ENCODE measurements at regions of chr9 and their contacts with region 1.

Region 1: DNA sequence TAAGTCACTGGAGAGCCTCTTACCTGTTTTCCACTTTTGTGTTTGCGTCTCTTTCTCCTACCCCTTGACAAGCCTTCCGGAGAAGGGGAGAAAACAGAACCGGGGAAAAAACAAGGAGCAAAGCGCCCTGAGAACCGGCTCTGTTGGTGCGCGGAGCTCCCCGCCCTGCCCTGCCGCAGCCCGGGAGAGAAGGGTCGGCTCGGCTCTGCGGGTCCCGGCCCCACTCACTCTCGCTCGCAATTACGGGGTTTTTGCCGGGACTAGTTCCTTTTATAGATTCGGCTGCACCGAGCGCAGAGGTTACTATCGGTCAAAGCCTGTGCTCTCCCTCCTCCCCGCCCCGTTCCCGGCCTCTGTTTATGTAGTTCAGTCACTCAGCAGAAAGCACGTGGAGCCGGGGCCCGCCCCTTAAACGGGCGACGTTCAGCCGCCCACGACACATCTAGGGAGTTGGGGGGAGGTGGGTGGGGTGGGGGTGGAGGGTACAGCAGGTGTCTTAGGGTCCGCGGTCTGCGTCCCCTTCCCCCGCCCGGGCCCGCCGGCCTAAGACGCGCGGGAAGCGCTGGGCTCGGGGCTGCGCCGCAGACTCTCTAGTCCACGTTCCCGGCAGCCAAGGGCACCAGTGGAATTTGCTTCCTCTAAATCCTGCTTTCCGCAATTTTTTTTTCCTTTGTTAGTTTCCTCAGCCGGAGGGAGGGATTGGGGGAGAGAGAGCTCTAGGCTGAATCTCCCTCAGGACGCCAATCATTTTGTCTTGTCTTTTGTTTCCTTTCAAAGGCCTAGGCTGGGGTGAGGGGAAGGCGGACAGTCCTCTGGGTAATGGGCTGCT is at the start of gene ABCA1:
- DNase-seq: peak; percentile 90 to 97 (median 95)
- ATAC-seq: peak; percentile 92 to 94
- H3K4me3 ChIP-seq: peak within 1 kb of the TSS; percentile 97
- H3K27ac ChIP-seq: peak within 1 kb of the TSS; percentile 65
- H3K4me1 ChIP-seq: peaks cover 4% of the 10 kb centered on the region
- H3K27me3 ChIP-seq: no peaks in the 10 kb centered on the region
- total RNA-seq, gene ABCA1: 6.3 to 14.2 (median 9.2) TPM

Region 2: DNA sequence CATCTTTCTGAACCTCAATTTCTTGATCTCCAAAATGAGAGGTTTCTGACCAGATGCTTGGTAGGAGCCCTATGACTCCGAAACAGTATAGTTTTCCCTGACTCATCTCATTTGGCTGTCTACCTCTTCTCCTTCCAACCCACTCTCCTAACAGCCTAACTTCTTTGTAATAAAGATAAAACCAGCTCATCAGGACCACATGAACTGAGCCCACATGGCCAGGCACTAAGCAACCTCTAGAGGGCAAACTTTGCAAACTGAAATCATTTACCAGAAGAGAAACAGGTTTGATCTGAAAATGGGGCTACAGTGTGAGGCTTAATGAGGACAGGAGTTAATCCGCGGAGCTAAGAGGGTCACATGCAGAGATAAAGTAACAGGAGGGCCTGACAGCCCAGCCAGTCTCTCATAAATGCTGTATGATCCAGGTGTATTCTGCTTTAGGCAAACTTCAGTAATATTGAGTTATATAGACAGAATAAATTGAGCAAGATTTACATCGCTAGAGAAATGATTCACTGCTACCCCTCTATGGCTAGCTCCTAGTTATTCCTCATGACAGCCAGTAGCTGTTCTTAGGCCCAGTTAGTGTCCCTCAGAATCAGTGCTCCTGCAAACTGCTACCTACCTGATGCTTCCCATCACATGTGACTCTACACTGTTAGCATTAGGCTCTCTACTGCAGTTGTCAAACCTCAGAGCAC is 64.8 kb before region 1 on chr9:
- intact Hi-C with region 1: loop called in 1 of 4 experiments (anchors 10 kb)
- DNase-seq: peak in 2 of 3 donors; percentile 34 to 66
- ATAC-seq: peak; percentile 75 to 84
- H3K4me3 ChIP-seq: no peak overlapping the region
- H3K27ac ChIP-seq: no peak overlapping the region
- H3K4me1 ChIP-seq: no peaks in the 10 kb centered on the region
- H3K27me3 ChIP-seq: no peaks in the 10 kb centered on the region

Region 3: GRCh38 chr9:104868687-104869404 is 59.3 kb before region 1 on chr9:
- intact Hi-C with region 1: loop called in 2 of 4 experiments (anchors 10 kb)
- DNase-seq: peak; percentile 62 to 82 (median 78)
- ATAC-seq: peak; percentile 89 to 92
- H3K4me3 ChIP-seq: no peak overlapping the region
- H3K27ac ChIP-seq: peak overlapping the region; percentile 15
- H3K4me1 ChIP-seq: peaks cover 5% of the 10 kb centered on the region
- H3K27me3 ChIP-seq: no peaks in the 10 kb centered on the region

Region 4: GRCh38 chr9:104968025-104968982 is 40.2 kb after region 1 on chr9:
- intact Hi-C with region 1: loop called in 3 of 4 experiments (anchors 1 to 5 kb)
- DNase-seq: peak; percentile 88 to 96 (median 96)
- ATAC-seq: peak; percentile 98 to 99
- H3K4me3 ChIP-seq: peak overlapping the region; percentile 75
- H3K27ac ChIP-seq: peak overlapping the region; percentile 94
- H3K4me1 ChIP-seq: no peaks in the 10 kb centered on the region
- H3K27me3 ChIP-seq: no peaks in the 10 kb centered on the region

Region 5: GRCh38 chr9:104991144-104991953 is 63.2 kb after region 1 on chr9:
- intact Hi-C with region 1: loop called in 2 of 4 experiments (anchors 2 to 10 kb)
- DNase-seq: peak; percentile 93 to 97 (median 97)
- ATAC-seq: peak; percentile 92 to 94
- H3K4me3 ChIP-seq: peak overlapping the region; percentile 42
- H3K27ac ChIP-seq: peak overlapping the region; percentile 94
- H3K4me1 ChIP-seq: peaks cover 14% of the 10 kb centered on the region
- H3K27me3 ChIP-seq: no peaks in the 10 kb centered on the region

Region 6: GRCh38 chr9:105157130-105157583 is 229.0 kb after region 1 on chr9:
- intact Hi-C with region 1: loop called in 3 of 4 experiments (anchors 5 kb)
- DNase-seq: peak; percentile 51 to 77 (median 70)
- ATAC-seq: peak; percentile 91 to 94
- H3K4me3 ChIP-seq: no peak overlapping the region
- H3K27ac ChIP-seq: no peak overlapping the region
- H3K4me1 ChIP-seq: no peaks in the 10 kb centered on the region
- H3K27me3 ChIP-seq: no peaks in the 10 kb centered on the region

Region 7: GRCh38 chr9:105191508-105192121 is 263.5 kb after region 1 on chr9:
- intact Hi-C with region 1: no loop called
- DNase-seq: no peak
- ATAC-seq: peak; percentile 34 to 40
- H3K4me3 ChIP-seq: no peak overlapping the region
- H3K27ac ChIP-seq: no peak overlapping the region
- H3K4me1 ChIP-seq: no peaks in the 10 kb centered on the region
- H3K27me3 ChIP-seq: no peaks in the 10 kb centered on the region

Region 8: DNA sequence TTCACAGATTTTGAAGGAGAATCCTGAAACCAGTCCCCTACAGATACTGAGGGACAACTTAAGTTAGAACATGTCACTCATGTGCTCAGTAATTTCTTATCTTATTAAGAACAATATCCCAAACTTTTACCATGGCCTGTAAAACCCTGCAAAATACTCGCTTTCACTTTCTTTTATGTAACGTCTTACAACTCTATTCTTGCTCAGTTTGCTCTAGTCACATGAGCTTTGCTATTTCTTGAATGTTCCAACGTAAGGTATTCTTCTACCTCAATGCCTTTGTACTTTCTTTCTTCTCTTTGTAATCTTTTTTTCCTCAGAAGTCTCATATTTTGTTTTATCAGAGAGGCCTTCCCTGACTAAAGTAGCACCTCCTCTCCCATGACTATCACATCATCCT is 780.3 kb after region 1 on chr9:
- intact Hi-C with region 1: no loop called
- DNase-seq: no peak
- ATAC-seq: no peak
- H3K4me3 ChIP-seq: no peak overlapping the region
- H3K27ac ChIP-seq: no peak overlapping the region
- H3K4me1 ChIP-seq: peaks cover 3% of the 10 kb centered on the region
- H3K27me3 ChIP-seq: no peaks in the 10 kb centered on the region

Measured in right cardiac atrium (tissue), 5 donors.